BJ (cell line): ENCODE measurements at regions of chr3 and their contacts with region 1.

Region 1: DNA sequence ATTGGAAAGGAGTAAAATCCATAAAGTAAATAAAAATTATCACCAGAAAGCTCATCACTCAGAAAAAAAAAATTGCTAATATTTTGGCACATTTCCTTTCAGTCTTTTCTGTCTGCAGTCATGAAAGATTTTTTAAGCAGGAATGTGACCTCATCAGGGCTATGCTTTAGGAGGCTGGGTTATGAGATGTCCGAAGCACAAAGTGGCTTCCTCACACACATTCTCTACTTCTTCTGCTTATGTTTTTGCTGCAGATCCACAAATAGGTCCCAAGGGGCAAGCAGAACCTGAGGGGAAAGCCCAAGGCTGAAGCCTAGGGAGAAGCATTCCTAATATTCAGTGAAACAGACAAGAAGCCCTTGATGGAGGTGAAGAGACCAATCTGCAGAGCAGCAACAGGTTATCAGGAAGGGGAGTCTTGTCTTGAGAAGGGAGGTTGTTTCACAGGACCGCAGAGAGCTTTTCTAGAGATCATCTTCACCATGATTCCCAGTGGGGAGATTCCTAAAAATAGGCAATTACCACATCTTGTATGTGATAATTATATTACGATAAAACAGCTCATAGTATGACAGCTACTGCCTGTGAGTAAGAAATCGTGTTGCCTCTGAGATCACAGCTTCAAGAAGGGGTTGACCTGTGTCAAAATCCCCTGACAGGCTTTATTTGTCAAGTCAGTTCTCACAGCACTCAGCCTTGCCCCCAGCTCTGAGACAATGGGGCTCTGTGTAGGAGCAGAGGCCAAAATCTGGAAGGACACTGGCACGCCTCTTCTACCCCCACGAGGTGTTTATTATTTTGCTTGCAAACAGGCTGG is 60.5 kb downstream of the IGF2BP2 start:
- DNase-seq: no peak
- H3K4me3 ChIP-seq: no peak overlapping the region
- H3K27me3 ChIP-seq: no peaks in the 10 kb centered on the region
- CTCF ChIP-seq: no peak

Region 2: DNA sequence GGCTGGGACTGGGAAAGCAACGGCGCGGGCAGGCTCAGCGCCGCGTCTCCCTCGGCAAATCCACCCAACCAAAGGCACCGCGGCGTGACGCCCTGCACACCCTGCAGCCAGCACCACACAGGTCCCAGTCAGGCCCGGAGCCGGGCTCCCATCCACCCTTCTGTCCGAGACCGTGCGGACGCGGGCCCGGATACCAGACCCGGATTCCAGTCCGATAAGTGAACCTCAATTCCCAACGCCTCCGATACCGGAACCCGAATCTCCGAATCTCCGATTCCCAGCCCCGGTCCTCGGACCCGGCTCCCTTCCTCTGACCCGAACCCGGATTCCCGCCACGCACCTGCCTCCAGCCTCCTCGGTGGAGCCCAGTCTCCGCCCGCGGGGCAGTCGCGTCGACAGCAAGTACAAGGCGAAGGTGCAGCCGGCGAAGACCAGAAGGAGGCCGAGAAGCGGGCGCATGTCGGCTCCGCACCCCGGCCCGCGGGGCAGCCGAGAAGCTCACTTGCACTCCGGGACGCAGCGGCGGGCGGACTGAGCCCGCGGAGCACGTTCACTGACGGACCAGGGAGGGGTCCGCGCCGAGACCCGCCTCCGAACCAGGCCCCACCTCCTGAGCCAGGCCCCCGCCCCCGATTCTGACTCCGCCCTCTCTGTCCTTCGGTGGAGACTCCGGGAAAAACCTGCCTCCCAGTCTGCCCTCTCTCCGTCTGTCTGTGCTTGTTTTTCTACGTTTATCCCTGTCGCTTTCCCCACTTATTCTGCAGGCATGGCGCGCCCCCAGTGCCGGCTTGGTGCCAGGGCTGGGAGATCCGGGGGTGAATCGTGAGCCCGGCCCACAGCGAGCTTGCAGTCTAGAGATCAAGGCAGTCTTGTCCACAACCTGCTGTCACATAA is 265.6 kb before region 1 on chr3 and contains the start of gene TMEM41A:
- CTCF ChIA-PET with region 1: no interaction called
- POLR2A ChIA-PET with region 1: no interaction called
- DNase-seq: peak; percentile 35
- H3K4me3 ChIP-seq: peak within 1 kb of the TSS; percentile 79
- H3K27me3 ChIP-seq: peaks cover 3% of the 10 kb centered on the region; the same call in 1 of the 2 replicates
- CTCF ChIP-seq: no peak
- polyA plus RNA-seq, gene TMEM41A: 13.8 and 18.9 TPM in 2 replicates

Region 3: DNA sequence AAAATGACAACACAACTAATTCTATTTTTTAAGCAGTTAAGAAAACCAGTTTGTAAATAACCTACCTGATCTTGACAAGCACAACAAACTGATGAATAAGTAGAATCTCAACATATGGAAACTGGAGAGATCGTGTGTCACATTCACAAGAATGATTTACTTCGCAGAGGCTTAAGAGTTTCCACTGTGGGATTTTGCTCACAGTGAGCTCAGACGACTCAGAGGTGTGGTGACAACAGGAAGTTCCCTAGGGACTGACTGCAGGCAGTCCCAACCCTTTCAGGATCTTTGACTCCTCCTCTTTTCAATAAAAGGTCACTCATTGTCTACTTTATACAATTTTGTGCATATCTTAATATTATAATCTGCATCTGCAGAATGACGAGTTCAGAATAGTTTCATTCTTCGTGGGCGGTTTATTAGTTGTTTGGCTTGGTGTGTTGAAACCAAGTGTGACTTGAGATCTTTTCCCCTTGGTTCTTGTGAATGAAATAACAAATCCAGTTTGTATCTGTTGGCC is 212.0 kb before region 1 on chr3 and contains the start of gene LIPH:
- CTCF ChIA-PET with region 1: no interaction called
- POLR2A ChIA-PET with region 1: no interaction called
- DNase-seq: no peak
- H3K4me3 ChIP-seq: no peak within 1 kb of the TSS
- H3K27me3 ChIP-seq: no peaks in the 10 kb centered on the region
- CTCF ChIP-seq: no peak
- polyA plus RNA-seq, gene LIPH: 0.17 and 0.20 TPM in 2 replicates

Region 4: GRCh38 chr3:185677146-185677829 is 87.1 kb before region 1 on chr3:
- CTCF ChIA-PET with region 1: interaction called, 10 read pairs
- POLR2A ChIA-PET with region 1: interaction called, 3 read pairs
- DNase-seq: no peak
- H3K4me3 ChIP-seq: no peak overlapping the region
- H3K27me3 ChIP-seq: no peaks in the 10 kb centered on the region
- CTCF ChIP-seq: peak; percentile 81

Region 5: GRCh38 chr3:185781759-185782158 is 17.4 kb after region 1 on chr3:
- CTCF ChIA-PET with region 1: interaction called, 13 read pairs
- POLR2A ChIA-PET with region 1: no interaction called
- DNase-seq: no peak
- H3K4me3 ChIP-seq: no peak overlapping the region
- H3K27me3 ChIP-seq: no peaks in the 10 kb centered on the region
- CTCF ChIP-seq: no peak

Region 6: DNA sequence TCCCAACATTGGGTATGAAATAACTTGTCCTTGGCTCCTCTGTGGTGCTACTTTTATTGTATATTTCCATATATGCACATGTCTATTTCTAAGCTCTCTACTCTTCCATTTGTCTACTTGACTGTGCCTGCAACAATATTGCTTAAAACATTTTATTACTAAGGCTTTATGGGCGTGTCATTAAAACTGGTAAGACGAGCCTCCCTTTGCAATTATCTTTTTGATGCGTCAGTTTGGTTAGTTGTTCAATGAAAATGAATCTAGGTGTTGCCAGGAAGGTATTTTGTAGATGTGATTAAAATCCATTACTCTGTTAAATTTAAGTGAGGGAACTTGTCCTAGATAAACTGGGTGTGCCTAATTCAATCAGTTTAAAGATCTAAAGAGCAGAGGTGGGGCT is 186.3 kb after region 1 on chr3:
- CTCF ChIA-PET with region 1: no interaction called
- POLR2A ChIA-PET with region 1: no interaction called
- DNase-seq: no peak
- H3K4me3 ChIP-seq: no peak overlapping the region
- H3K27me3 ChIP-seq: peaks cover 2% of the 10 kb centered on the region; the same call in 1 of the 2 replicates
- CTCF ChIP-seq: no peak